ENCODE measurements at regions of chr1 and their contacts with region 1.

Region 1: DNA sequence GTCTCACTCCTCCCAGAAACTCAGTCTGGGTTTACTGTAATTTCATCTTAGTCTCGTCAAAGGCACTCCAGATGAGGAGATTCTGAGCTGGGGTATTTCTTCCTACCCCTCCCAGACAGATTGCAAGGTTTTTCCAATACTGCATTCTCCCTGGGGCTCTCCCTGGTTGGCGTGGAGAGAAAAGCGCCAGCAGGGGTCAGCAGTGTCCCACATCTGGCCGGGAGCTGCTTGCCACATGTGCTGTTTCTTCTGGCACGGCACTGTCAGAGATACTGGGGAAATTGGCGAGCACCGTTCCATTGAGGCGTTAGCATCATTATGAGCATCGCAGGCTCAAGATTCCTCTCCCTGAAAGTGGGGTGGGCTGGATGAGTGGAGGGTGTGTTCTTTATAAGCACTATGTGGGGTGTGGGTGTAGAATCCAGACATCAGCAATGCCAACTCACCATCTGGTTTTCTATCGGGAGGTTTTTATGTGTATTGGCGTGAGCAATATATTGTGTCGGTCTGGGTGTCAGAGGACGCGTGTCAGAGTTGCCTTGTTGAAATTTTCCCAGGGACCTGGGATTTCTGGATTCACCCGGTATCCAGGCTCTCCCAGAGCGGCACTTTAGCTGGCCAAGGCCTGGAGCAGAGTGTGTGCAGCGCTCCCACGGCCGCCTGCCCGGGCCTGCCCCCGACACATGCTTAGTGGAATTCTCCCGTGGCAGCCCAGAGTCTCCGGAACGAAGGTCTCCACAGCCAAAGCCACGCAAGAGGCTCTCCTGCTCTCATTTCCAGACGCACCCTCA is 8.0 kb upstream of the NAV1 start:
- DNase-seq: peak; percentile 87
- H3K4me3 Mint-ChIP-seq: no peak overlapping the region
- H3K27ac Mint-ChIP-seq: peak overlapping the region; percentile 40
- H3K4me1 Mint-ChIP-seq: peaks cover 40% of the 10 kb centered on the region
- H3K27me3 Mint-ChIP-seq: no peaks in the 10 kb centered on the region
- CTCF ChIP-seq: peak; percentile 93

Region 2: GRCh38 chr1:201703621-201704439 is 172.9 kb after region 1 on chr1:
- CTCF ChIA-PET with region 1: interaction called, 4 read pairs
- intact Hi-C with region 1: loop called (anchors 1 kb)
- DNase-seq: peak; percentile 93
- H3K4me3 Mint-ChIP-seq: no peak overlapping the region
- H3K27ac Mint-ChIP-seq: no peak overlapping the region
- H3K4me1 Mint-ChIP-seq: no peaks in the 10 kb centered on the region
- H3K27me3 Mint-ChIP-seq: no peaks in the 10 kb centered on the region
- CTCF ChIP-seq: peak; percentile 98

Region 3: GRCh38 chr1:201792534-201793305 is 261.8 kb after region 1 on chr1:
- CTCF ChIA-PET with region 1: interaction called, 8 read pairs
- intact Hi-C with region 1: loop called (anchors 1 kb)
- DNase-seq: peak; percentile 85
- H3K4me3 Mint-ChIP-seq: no peak overlapping the region
- H3K27ac Mint-ChIP-seq: no peak overlapping the region
- H3K4me1 Mint-ChIP-seq: peaks cover 10% of the 10 kb centered on the region
- H3K27me3 Mint-ChIP-seq: no peaks in the 10 kb centered on the region
- CTCF ChIP-seq: peak; percentile 90